Heart left ventricle (tissue), 16 donors: ENCODE measurements at regions of chr7 and their contacts with region 1.

Region 1: GRCh38 chr7:14332155-14332554 is 342.7 kb upstream of the ETV1 start:
- DNase-seq: peak; percentile 16 to 64 (median 48)
- ATAC-seq: peak; percentile 68 to 93 (median 86)
- H3K4me3 ChIP-seq: no peak overlapping the region
- H3K27ac ChIP-seq: peak overlapping the region in 1 of 12 donors; percentile 17
- H3K4me1 ChIP-seq: peaks cover 0 to 9% (median 0%) of the 10 kb centered on the region in 12 donors
- H3K27me3 ChIP-seq: no peaks in the 10 kb centered on the region
- CTCF ChIP-seq: no peak
- POLR2A ChIP-seq: no peak

Region 2: DNA sequence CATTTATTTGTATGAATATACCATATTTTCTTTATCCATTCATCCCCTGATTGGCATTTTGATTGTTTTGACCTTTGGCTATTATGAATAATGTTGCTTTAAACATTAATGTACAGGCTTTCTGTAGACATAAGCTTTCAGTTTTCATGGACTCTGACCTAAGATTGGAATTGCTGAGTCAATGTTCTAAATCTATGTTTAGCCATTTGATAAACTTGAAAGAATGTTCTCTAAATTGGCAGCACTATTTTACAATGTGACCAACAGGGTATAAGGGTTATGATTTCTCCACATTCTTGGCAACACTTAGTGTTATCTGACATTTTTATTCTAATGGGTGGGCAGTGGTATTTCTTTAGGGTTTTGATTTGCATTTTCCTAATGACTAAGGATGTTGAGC is 113.0 kb before region 1 on chr7:
- intact Hi-C with region 1: loop called in 1 of 10 experiments (anchors 10 kb)
- DNase-seq: no peak
- ATAC-seq: peak; percentile 76 to 90 (median 82)
- H3K4me3 ChIP-seq: no peak overlapping the region
- H3K27ac ChIP-seq: peak overlapping the region in 10 of 12 donors; percentile 8 to 76 (median 56)
- H3K4me1 ChIP-seq: peaks cover 0 to 8% (median 0%) of the 10 kb centered on the region in 12 donors
- H3K27me3 ChIP-seq: no peaks in the 10 kb centered on the region
- CTCF ChIP-seq: no peak
- POLR2A ChIP-seq: no peak